Left cardiac atrium (tissue), 4 donors: ENCODE measurements at regions of chr3 and their contacts with region 1.

Region 1: GRCh38 chr3:23945903-23946751 is 1.0 kb downstream of the NR1D2 start:
- DNase-seq: peak; percentile 98
- ATAC-seq: peak; percentile 94

Region 2: DNA sequence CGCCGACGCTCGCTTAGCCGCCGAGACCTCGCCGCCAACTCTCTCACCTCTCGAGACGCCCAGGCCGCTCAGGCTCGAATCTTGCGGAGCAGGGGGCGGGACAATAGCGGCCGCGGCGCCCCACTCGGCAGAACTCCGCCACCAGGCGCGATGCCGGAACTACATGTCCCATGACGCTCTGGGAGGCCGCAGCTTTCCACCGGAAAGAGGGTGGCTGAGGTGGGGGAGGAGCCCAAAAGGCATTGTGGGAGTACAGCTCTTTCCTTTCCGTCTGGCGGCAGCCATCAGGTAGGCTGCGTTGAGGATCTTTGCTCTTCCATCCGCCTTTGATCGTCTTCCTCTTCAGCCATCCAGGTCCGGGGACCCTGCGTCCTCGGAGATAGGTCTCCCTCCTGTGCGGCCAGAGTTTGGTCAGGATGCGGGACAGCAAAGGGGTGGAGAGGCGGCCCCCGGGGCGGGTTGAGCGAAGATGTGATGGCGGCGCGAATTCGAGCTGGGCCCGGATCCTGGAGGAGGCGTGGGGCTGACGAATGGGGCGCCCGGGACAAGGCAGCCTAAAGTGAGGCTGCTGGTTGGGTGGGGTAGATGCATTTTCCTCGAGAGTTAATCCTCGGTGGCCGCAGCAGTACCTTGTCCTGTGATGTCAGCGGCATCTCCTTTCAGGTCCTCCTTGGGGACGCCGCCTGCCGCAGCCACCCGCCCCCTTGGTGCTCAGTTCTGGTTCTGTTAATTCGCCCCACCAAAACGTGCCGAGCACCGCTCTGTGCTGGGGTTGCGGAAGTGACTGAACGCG is 29.0 kb before region 1 on chr3 and contains the starts of genes NKIRAS1 and RPL15:
- intact Hi-C with region 1: loop called in 1 of 2 experiments (anchors 2 kb)
- DNase-seq: peak; percentile 98
- ATAC-seq: peak; percentile 98
- total RNA-seq, gene NKIRAS1: 12.9 to 15.4 TPM
- total RNA-seq, gene RPL15: 1,012 to 1,091 TPM

Region 3: DNA sequence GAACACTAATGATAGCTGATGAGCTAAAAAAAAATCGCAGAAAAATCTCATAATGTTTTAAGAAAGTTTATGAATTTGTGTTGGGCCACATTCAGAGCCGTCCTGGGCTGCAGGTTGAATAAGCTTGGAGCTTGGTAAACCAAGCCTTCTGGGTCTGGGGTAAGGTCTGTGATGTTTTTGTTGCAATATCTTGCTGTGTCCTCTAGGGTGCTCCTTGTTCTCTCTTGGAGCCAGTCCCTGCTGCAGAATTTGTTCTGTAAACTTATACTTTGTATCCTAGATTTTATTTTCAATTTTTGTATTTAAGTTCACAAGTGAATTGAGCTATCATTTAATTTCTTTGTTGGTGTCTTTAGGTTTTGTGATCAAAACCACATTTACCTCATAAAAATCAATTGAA is 142.7 kb after region 1 on chr3:
- intact Hi-C with region 1: no loop called
- DNase-seq: no peak
- ATAC-seq: no peak

Region 4: DNA sequence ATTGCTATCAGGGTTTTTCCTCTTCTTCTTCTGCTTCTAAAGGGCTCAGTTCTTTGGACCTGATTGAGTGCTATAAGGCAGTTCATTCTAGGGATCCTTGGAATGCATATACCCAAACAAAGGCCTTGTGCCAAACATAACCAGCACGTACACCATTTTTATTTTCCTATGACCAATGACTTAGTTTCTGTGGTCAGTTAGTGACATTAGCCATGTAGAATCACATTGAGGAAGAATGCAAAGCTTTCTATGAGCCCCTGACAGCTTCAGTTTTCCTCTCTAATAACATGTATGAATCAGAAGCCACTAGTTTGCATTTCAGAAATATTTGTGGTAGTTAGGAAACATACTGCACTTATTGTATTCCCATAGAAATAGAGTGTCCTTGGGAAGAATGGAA is 308.5 kb after region 1 on chr3:
- intact Hi-C with region 1: no loop called
- DNase-seq: no peak
- ATAC-seq: no peak